ENCODE measurements at regions of chr12 and their contacts with region 1.

Region 1: GRCh38 chr12:12449467-12450025 is 92.7 kb downstream of the BORCS5 start:
- DNase-seq: peak; percentile 80
- H3K4me3 Mint-ChIP-seq: peak overlapping the region; percentile 41
- H3K27ac Mint-ChIP-seq: peak overlapping the region; percentile 94
- H3K4me1 Mint-ChIP-seq: peaks cover 29% of the 10 kb centered on the region
- H3K27me3 Mint-ChIP-seq: no peaks in the 10 kb centered on the region
- CTCF ChIP-seq: no peak

Region 2: DNA sequence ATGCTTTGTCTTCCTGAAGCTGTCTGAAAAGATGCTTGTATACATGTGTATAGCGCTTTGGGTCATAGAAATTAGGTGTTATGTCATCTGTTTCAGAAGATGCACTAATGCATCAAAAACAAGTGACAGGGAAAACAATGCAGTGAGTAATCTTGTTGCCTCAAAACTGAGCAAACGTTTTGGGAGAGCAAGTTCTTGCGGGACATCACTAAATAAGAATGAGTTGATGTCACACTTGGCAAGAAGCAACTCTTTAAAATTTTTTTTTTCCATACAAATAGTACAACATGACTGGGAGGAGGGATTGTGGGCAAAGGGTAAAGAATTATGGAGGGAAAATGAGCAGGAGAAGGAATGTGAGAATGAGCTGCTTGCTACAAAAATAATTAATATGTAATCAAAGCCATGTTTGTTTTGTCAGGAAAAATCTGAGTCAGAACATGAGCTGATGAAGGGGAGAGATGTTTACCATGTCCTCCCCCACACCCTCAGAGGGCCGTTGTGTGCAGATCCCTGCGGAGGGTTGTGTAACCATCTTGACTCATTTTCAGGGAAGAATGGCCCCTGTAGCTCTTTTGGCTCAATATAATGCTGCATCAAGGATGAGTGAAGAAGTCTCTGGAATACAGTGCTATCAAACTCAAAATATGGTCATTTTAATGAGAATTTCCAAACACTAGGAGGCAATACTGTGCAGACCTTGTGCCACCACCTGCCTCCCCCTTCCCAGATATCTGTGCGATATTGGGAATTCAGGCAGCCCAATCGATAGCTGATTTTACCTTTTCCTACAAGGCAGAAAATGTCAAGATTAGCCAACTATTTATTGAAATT is 51.3 kb before region 1 on chr12:
- CTCF ChIA-PET with region 1: no interaction called
- intact Hi-C with region 1: loop called (anchors 5 kb)
- DNase-seq: peak; percentile 77
- H3K4me3 Mint-ChIP-seq: peak overlapping the region; percentile 0
- H3K27ac Mint-ChIP-seq: peak overlapping the region; percentile 67
- H3K4me1 Mint-ChIP-seq: peaks cover 49% of the 10 kb centered on the region
- H3K27me3 Mint-ChIP-seq: no peaks in the 10 kb centered on the region
- CTCF ChIP-seq: no peak

Region 3: DNA sequence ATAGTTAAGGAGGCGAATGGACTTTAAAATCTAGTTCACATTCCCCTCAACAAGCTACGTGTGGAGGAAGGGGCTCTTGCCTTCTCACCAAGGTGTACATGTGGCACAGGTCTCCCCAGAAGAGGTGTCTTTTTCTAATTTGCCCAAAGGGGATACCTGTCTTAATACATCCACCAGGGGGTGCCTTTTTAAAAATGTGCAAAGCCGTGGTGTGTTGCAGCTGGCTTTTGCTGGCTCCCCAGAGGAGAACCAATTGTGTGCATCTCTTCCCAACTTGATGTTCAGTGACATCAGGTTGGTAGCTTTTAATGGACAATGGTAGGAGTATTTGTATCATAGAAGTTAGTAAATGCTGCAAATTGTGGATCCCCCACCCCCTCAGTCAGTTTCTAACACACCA is 195.9 kb after region 1 on chr12:
- CTCF ChIA-PET with region 1: no interaction called
- intact Hi-C with region 1: no loop called
- DNase-seq: peak; percentile 27
- H3K4me3 Mint-ChIP-seq: no peak overlapping the region
- H3K27ac Mint-ChIP-seq: no peak overlapping the region
- H3K4me1 Mint-ChIP-seq: no peaks in the 10 kb centered on the region
- H3K27me3 Mint-ChIP-seq: no peaks in the 10 kb centered on the region
- CTCF ChIP-seq: peak; percentile 45

Measured in Calu3 (cell line).